Endothelial cell of umbilical vein (primary cell): ENCODE measurements at regions of chr1 and their contacts with region 1.

Region 1: DNA sequence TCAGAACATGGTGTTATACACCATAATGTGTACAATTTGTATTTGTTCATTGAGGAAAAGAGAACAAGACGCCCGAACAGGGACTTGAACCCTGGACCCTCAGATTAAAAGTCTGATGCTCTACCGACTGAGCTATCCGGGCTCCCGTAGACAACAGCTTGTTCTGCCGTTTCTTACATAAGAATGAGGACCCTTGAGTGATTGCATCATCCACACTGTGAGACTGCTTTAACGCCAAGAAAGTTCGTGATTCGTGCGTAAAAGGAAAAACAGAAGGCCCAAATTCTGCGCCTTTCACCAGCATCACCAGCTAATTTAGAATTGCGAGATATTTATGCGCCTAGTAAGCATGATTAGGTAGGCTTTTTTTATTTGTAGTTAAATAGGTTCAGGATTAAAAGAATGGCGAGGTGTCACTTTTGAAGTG is 9.2 kb upstream of the MDM4 start:
- DNase-seq: peak; percentile 97
- H3K4me3 ChIP-seq: peak overlapping the region; percentile 32 to 94 (median 92)
- H3K27ac ChIP-seq: peak overlapping the region; percentile 76
- H3K4me1 ChIP-seq: peaks cover 34% of the 10 kb centered on the region
- H3K27me3 ChIP-seq: no peaks in the 10 kb centered on the region
- CTCF ChIP-seq: no peak
- POLR2A ChIP-seq: no peak

Region 2: DNA sequence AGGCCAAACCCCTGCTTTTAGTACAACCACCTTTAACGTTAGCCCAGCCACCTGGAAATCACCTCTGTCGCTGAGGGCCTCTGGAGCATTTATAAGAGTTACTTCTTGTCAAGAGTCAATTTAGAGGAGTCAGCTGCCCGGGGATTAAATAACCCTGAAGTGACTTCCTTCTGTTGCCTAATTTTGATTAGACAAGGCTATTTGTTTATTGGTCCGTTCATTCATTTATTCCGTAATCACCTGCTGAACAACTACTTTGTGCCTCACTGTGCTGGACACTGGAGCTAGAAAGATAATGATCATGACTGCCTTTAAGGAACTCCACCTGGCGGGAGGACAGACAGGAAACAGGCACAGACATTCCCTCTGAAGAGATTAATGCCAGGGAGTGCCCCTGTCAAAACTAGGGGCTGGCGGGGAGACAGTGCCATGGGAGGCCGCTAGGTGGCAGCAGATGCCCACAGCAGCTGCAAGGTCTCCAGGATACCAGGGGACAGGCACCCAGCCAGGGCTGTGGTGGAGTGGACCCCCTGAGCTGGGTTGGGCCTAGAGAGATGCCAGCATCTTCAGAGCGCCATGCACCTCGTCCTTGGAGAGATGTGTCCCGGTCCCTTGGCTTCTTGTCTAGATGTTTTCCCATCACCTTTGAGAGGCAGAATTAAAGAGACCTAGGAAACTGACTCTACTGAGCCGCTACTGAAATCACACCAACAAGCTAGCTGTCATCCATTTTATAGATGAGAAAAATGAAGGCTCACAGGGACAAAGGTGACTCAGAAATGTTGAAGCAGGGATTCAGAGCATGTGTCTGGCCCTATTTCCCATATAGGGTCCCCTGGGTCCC is 344.5 kb before region 1 on chr1:
- CTCF ChIA-PET with region 1: interaction called, 5 read pairs
- POLR2A ChIA-PET with region 1: no interaction called
- dilution Hi-C with region 1: no loop called
- intact Hi-C with region 1: loop called (anchors 1 kb)
- DNase-seq: peak; percentile 68
- H3K4me3 ChIP-seq: no peak overlapping the region
- H3K27ac ChIP-seq: no peak overlapping the region
- H3K4me1 ChIP-seq: peaks cover 3% of the 10 kb centered on the region
- H3K27me3 ChIP-seq: peaks cover 0 to 2% of the 10 kb centered on the region in 2 experiments
- CTCF ChIP-seq: peak; percentile 98
- POLR2A ChIP-seq: no peak

Region 3: GRCh38 chr1:204363335-204364124 is 143.4 kb before region 1 on chr1:
- CTCF ChIA-PET with region 1: interaction called, 11 read pairs
- POLR2A ChIA-PET with region 1: no interaction called
- dilution Hi-C with region 1: no loop called
- intact Hi-C with region 1: loop called (anchors 1 kb)
- DNase-seq: peak; percentile 83
- H3K4me3 ChIP-seq: peak overlapping the region in 2 of 3 experiments; percentile 30 to 35
- H3K27ac ChIP-seq: no peak overlapping the region
- H3K4me1 ChIP-seq: peaks cover 53% of the 10 kb centered on the region
- H3K27me3 ChIP-seq: no peaks in the 10 kb centered on the region
- CTCF ChIP-seq: peak; percentile 93 to 94
- POLR2A ChIP-seq: no peak

Region 4: DNA sequence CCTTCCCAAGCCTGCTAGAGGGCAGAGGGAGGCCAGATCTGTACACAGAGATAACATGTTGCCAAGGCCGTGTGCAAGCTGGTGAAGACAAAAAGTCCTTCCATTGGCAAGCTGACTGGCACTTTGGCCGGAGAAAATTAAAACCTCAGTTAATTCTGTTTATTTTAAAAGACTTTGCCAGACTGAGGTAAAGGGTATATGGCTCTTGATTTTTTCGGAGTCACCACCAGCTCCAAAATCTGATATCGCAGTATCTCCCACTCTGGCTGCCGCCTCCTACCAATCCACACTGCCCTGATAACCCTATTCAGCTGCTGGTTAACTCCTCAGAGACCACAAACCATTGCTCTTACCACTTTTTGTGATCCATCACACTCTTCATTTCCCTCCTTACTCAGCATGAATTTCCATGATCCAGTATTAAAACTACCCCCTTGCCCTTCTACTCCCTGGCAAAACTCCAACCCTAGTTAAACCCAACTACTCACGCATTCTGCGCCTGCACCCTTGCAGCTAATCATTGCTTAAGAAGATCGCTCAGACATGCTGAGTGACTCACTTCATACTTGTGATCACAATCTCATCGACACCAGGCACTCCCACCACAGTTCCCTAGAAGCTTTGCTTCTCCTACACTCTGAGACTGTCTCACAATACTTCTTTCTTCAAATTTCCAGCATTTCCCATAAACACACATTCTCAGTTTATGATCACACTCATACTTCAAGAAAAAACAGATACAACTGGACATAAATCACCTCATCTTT is 89.6 kb before region 1 on chr1:
- CTCF ChIA-PET with region 1: interaction called, 14 read pairs
- POLR2A ChIA-PET with region 1: no interaction called
- dilution Hi-C with region 1: no loop called
- intact Hi-C with region 1: no loop called
- DNase-seq: peak; percentile 95
- H3K4me3 ChIP-seq: peak overlapping the region in 1 of 3 experiments; percentile 31
- H3K27ac ChIP-seq: peak overlapping the region; percentile 84
- H3K4me1 ChIP-seq: peaks cover 26% of the 10 kb centered on the region
- H3K27me3 ChIP-seq: no peaks in the 10 kb centered on the region
- CTCF ChIP-seq: no peak
- POLR2A ChIP-seq: no peak

Region 5: DNA sequence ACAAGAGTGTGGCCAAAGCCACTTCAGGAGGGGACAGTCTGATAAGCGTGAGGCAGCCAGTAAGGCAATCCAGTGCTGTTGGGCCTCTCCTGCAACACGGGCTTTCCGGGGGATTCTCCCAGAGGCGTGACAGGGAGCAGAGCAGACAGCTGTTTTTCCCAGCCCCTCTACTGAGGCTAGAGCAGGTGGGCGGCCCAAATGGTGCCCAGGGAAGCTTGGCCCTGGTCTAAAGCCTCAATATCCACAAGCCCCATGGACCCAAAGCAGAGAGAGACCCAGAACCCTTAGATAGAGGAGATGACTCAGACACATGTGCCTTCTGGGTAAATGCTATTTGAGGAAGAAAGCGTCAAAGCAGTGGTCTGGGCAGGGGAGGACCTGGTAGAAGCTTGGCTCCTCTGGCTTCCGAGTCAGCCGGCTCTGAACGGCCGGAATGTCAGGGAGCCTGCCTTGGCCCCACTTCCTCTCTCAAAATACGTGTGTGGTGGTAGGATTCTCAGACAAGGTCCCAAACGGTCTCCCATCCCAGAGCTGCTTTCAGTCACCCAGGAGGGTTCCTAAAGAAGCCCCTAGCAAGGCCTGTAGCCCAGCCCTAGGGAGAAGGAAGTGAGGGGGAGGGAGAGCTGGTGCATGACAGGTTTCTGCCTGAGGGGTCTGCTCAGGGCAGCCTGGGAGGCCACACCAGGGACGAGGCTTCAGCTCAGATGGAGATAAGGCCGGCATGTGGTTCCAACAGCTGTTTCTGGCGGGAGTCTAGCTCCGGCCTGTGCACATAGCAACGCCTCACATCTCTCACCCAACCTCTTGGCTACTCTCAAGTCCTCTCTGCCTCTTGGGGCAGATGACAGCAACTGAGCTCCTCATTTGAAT is 41.2 kb before region 1 on chr1:
- CTCF ChIA-PET with region 1: interaction called, 17 read pairs
- POLR2A ChIA-PET with region 1: no interaction called
- dilution Hi-C with region 1: no loop called
- intact Hi-C with region 1: no loop called
- DNase-seq: peak; percentile 44
- H3K4me3 ChIP-seq: no peak overlapping the region
- H3K27ac ChIP-seq: peak overlapping the region; percentile 2
- H3K4me1 ChIP-seq: peaks cover 66% of the 10 kb centered on the region
- H3K27me3 ChIP-seq: no peaks in the 10 kb centered on the region
- CTCF ChIP-seq: no peak
- POLR2A ChIP-seq: no peak

Region 6: DNA sequence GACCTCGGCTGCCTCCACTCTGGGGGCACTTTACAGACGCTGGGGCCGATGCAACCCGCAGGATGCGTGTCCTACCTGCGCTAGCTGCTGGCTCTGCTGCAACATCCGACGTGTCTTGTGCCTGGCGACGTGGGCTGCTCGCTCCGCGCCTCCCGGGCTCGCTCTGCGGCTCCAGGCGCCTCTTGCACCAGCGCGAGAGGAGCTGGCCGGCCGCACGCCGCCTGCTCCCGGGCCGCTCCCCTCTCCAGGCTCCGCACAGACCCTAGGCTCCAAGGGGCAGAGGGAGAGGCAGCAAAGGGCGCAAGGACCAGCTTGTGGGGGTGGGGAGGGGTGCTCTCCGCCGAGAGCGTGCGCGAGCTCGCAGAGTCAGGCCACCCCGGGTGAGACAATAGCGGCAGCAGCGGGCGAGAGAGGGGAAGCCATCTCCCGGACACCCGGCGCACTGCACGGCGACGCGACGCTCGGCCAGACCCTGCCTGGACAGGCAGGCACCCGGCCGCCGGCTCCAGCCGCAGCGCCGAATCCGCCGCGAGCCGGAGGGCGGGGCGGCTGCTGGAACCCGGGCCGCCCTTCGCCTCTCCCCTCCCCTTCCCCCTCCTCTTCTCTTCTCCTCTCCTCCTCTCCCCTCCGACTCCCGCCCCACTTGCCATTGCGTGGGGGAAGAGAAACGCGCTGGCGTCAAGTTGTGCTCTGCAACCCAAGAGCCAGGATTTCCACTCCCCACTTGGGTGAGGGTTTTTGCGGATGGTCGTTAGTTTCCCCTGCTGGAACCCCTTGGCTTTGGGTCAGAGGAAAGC is 12.5 kb before region 1 on chr1 and contains the start of gene PIK3C2B:
- CTCF ChIA-PET with region 1: interaction called, 52 read pairs
- POLR2A ChIA-PET with region 1: interaction called, 3 read pairs
- dilution Hi-C with region 1: no loop called
- intact Hi-C with region 1: loop called (anchors 1 kb)
- DNase-seq: peak; percentile 88
- H3K4me3 ChIP-seq: peak within 1 kb of the TSS; percentile 56 to 85 (median 64)
- H3K27ac ChIP-seq: peak within 1 kb of the TSS; percentile 63
- H3K4me1 ChIP-seq: peaks cover 18% of the 10 kb centered on the region
- H3K27me3 ChIP-seq: no peaks in the 10 kb centered on the region
- CTCF ChIP-seq: peak; percentile 49 to 64
- POLR2A ChIP-seq: peak; percentile 82
- total RNA-seq, gene PIK3C2B: 41.8 and 49.0 TPM in 2 replicates

Region 7: GRCh38 chr1:204868340-204868700 is 361.3 kb after region 1 on chr1:
- CTCF ChIA-PET with region 1: no interaction called
- POLR2A ChIA-PET with region 1: no interaction called
- dilution Hi-C with region 1: no loop called
- intact Hi-C with region 1: no loop called
- DNase-seq: no peak
- H3K4me3 ChIP-seq: no peak overlapping the region
- H3K27ac ChIP-seq: no peak overlapping the region
- H3K4me1 ChIP-seq: no peaks in the 10 kb centered on the region
- H3K27me3 ChIP-seq: no peaks in the 10 kb centered on the region
- CTCF ChIP-seq: no peak
- POLR2A ChIP-seq: no peak